Cardiac septum (tissue), 1 donor: ENCODE measurements at regions of chr10 and their contacts with region 1.

Region 1: GRCh38 chr10:71974489-71975021 is 10.4 kb downstream of the CHST3 start:
- DNase-seq: no peak

Region 2: DNA sequence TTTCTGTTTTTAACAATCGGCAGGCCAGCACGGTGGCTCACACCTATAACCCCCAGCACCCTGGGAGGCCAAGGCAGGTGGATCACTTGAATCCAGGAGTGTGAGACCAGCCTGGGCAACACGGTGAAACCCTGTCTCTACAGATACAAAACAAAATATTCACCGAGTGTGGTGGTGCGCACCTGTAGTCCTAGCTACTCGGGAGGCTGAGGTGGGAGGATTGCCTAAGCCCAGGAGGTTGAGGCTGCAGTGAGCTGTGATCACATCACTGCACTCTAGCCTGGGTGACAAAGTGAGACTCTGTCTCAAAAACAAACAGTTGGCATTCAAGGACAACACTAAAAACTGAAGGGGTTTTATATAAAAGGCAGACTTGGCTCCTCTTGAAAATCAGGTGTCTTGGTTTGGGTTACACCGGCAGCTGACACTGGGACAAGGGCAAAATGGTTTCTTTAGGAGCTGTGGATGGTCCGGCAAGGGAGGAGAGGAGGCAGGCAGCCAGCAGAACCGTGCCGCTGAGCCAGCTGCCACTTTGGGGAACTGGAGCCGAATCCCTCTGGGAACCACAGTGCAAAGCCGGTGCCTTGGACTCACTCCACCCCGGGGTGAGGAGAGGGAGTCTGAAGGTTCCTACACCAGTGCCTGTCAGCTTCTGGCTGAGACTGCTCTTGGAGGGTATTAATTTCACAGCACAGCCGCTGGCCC is 42.2 kb after region 1 on chr10:
- intact Hi-C with region 1: loop called (anchors 5 kb)
- DNase-seq: no peak